Mammary epithelial cell (primary cell): ENCODE measurements at regions of chr20 and their contacts with region 1.

Region 1: GRCh38 chr20:41274152-41274551 is 43.4 kb downstream of the ZHX3 start:
- DNase-seq: no peak
- H3K4me3 ChIP-seq: no peak overlapping the region
- H3K27ac ChIP-seq: no peak overlapping the region
- H3K4me1 ChIP-seq: no peaks in the 10 kb centered on the region
- H3K27me3 ChIP-seq: no peaks in the 10 kb centered on the region
- CTCF ChIP-seq: no peak

Region 2: DNA sequence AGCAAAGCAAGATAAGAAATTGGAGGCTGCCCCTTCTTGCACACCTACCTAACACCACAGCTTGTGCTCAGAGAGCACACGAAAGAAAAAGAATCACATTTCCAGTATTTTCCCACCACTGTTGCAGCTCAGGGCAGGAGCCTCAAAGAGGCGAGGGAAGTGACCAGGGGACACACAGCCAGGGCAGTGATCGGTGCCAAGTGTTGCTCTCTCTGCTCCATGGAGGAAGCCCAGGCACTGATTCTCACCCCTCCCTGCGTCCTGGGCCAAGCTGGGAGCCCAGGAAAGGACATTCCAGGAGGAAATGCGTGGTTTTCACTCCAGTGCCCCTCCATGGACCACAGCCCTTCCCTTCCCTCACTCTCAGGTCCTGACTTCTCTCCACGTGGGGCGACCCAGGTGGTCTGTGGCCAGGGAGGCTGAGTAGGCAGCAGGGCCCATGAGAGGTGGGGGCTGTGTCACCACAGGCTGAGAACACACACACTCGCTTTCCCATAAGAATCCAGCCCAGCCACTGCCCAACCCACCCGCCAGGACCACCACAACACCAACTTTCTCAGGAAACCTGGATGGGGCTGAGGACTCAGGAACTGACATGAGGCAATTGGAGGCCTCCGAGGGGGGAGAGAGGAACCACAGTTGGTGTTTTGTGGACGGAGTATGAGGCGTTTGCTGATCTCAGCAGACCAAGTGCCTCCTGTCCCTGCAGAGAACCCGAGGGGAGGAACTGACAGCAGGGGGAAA is 503.4 kb before region 1 on chr20:
- CTCF ChIA-PET with region 1: no interaction called
- dilution Hi-C with region 1: no loop called
- in situ Hi-C with region 1: no loop called
- intact Hi-C with region 1: no loop called
- DNase-seq: no peak
- H3K4me3 ChIP-seq: no peak overlapping the region
- H3K27ac ChIP-seq: no peak overlapping the region
- H3K4me1 ChIP-seq: no peaks in the 10 kb centered on the region
- H3K27me3 ChIP-seq: no peaks in the 10 kb centered on the region
- CTCF ChIP-seq: no peak

Region 3: DNA sequence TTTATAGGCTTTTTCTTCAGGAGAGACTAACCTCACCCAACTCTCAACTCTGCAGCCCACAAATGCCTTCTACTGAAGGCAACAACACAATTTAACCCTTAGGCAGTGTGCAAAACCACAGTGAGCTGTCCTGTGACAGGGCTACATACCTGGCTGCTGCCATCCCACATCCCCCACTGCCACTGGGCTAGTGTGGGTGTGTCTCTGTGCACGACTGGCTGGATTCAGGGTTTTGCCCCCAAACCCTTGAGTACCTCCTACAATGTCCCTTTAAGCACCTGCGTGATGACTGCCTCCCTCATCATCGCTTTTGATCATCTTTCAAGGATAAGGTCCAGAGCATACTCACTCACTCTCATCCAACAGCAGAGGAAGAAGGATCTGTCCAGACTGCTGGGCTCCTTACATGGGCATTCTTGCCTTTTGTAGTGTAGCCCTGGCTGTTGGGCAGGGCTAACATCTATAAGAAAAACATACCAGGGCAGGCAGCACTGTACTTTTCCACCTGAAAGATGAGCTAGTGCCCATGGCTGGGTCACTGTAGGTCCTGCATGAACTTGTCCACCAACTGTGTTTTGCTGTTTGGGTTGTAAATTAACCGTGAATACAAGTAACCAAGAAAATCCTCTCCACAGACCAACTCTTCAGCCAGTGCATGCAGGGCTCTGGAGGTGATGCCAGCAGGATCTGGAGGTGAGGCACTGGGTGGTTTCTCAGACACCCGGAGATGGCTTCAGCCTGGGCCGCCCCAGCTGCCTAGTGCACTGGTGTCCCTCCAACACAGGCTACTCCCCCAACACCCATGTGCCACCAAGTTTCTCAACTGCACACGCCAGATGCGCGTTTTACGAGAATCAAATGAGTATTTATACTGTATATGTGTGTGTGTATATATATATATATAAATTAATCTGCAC is 91.6 kb before region 1 on chr20:
- CTCF ChIA-PET with region 1: no interaction called
- dilution Hi-C with region 1: loop called (anchors 5 kb)
- in situ Hi-C with region 1: no loop called
- intact Hi-C with region 1: no loop called
- DNase-seq: peak; percentile 80
- H3K4me3 ChIP-seq: no peak overlapping the region
- H3K27ac ChIP-seq: no peak overlapping the region
- H3K4me1 ChIP-seq: peaks cover 50% of the 10 kb centered on the region
- H3K27me3 ChIP-seq: no peaks in the 10 kb centered on the region
- CTCF ChIP-seq: no peak